CD4-positive, alpha-beta T cell (primary cell): ENCODE measurements at regions of chr6 and their contacts with region 1.

Region 1: DNA sequence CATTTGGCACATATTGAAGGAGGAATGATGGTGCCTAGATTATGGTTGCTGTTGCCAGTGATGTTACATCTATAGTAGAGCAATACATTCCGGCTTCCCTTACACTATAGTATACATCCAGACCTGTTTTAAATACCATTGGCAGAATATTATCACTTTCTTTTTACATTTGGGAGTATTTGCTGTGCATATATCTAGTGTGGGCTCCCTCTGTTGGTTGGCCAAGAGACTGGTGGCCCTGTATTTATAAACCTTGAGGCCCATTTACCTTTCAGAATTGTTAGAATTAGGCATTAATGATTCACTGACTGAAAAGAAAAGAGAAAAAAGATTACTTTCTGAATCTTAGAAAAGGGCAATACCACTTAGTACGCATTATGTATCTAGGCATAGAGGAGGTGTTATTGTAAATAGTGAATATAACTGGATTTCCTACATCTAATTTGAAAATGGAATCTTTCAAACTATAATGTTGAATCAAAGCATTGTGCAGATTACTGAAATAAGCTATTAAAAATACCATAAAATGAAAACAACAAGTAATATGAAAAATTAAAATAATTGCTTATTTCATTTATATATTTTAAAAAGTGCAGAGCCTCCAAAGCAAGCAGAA is 628.8 kb upstream of the MAN1A1 start:
- DNase-seq: peak in 3 of 14 experiments; percentile 8 to 19 (median 12)
- ATAC-seq: no peak
- H3K4me3 ChIP-seq: no peak overlapping the region
- H3K4me3 Mint-ChIP-seq: no peak overlapping the region
- H3K27ac ChIP-seq: no peak overlapping the region
- H3K27ac Mint-ChIP-seq: no peak overlapping the region
- H3K4me1 ChIP-seq: no peaks in the 10 kb centered on the region
- H3K4me1 Mint-ChIP-seq: no peaks in the 10 kb centered on the region
- H3K27me3 ChIP-seq: no peaks in the 10 kb centered on the region
- H3K27me3 Mint-ChIP-seq: no peaks in the 10 kb centered on the region
- CTCF ChIP-seq: no peak

Region 2: DNA sequence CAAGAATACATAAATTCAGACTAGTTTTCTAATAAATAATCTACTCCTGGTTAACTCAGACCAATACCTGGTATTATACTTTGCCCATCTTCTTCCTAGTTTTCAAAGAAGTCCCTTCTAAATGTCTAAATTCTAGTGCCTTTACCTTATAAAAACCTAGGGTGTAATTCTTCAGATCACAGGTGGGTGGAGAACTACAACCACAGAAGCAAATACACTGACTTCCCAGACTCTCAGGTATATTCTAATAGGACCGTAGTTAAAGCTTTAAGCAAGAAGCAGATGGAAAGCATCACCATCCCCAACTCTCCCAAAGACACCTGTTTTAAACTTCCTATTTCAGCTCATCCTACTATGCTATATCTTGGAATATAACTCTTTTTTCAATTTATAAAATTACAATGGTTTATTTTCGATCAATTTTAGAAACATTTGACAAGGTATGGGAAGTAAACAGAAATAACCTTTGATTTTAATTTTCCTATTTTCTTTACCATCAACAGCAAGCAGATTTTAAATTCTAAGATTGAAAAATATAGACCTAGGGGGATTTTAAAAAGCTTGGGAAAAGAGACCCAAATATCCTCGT is 644.6 kb before region 1 on chr6:
- CTCF ChIA-PET with region 1: no interaction called
- POLR2A ChIA-PET with region 1: no interaction called
- intact Hi-C with region 1: loop called (anchors 5 to 10 kb)
- DNase-seq: peak in 3 of 14 experiments; percentile 55 to 65 (median 60)
- ATAC-seq: peak; percentile 75
- H3K4me3 ChIP-seq: no peak overlapping the region
- H3K4me3 Mint-ChIP-seq: no peak overlapping the region
- H3K27ac ChIP-seq: no peak overlapping the region
- H3K27ac Mint-ChIP-seq: no peak overlapping the region
- H3K4me1 ChIP-seq: peaks cover 13% of the 10 kb centered on the region
- H3K4me1 Mint-ChIP-seq: peaks cover 5% of the 10 kb centered on the region
- H3K27me3 ChIP-seq: no peaks in the 10 kb centered on the region
- H3K27me3 Mint-ChIP-seq: no peaks in the 10 kb centered on the region
- CTCF ChIP-seq: peak; percentile 81